ENCODE measurements at regions of chr9 and their contacts with region 1.

Region 1: DNA sequence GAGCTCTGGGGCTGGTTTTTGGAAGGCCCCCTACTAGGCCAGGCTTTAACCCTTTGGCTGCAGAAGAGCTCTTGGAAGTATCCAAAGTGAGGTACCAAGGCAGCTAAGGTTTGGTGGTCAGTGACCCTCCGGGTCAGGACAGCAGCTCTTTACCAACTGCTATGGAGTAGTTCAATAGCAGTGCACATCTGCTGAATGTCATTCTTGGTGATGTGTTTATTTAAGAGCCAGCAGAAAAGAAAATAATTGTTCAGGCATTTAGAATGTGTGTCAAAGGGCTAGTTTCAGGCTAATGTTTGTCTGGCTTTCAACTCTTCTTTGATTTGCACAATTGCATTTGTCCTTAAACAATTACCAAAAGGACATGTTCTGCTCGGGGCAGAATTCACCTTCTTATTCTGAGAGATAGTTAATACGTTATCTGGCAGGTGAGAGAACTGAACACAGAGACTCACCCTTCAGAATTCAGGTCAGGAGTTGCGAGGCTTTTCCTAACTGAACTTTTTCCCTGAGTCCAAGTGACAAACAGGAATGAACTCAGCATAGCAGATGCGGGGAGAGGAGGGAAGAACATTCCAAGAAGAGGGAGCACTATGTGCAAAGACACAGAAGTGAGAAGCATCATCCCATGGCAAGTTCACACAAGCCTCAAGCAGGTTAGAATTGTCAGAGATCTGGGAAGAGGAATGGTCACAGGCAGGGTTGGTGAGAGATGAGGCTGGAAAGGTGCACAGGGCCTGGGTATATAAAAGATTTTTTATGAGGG is 556.7 kb upstream of the TLE4 start:
- DNase-seq: peak in 1 of 2 donors; percentile 9
- H3K4me3 ChIP-seq: no peak overlapping the region
- H3K27ac ChIP-seq: no peak overlapping the region
- H3K4me1 ChIP-seq: no peaks in the 10 kb centered on the region
- H3K27me3 ChIP-seq: no peaks in the 10 kb centered on the region
- CTCF ChIP-seq: no peak
- EP300 ChIP-seq: no peak
- POLR2A ChIP-seq: no peak

Region 2: DNA sequence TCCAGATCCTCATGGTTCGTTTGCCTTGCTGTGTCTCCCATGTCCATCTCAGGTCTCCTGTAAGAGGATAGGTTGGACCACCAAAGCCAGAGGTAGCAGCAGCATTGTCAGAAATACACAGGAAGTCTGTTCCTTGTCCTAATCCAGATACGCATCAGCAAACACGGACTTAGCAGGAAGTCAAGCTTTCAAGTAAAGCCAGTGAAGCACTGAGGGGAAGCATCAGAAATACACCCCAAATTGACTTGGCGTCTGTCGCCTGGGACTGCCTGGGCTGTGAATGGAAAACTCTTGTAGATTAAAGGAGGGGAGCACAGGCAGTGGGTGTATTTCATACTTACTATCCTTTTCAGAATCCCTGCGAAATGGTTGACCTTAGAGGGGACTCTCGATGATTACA is 546.9 kb before region 1 on chr9:
- intact Hi-C with region 1: no loop called
- DNase-seq: no peak
- H3K4me3 ChIP-seq: no peak overlapping the region
- H3K27ac ChIP-seq: no peak overlapping the region
- H3K4me1 ChIP-seq: no peaks in the 10 kb centered on the region
- H3K27me3 ChIP-seq: no peaks in the 10 kb centered on the region
- CTCF ChIP-seq: no peak
- EP300 ChIP-seq: no peak
- POLR2A ChIP-seq: no peak

Region 3: GRCh38 chr9:78973889-78974288 is 41.2 kb before region 1 on chr9:
- intact Hi-C with region 1: loop called (anchors 5 kb)
- DNase-seq: no peak
- H3K4me3 ChIP-seq: no peak overlapping the region
- H3K27ac ChIP-seq: no peak overlapping the region
- H3K4me1 ChIP-seq: no peaks in the 10 kb centered on the region
- H3K27me3 ChIP-seq: no peaks in the 10 kb centered on the region
- CTCF ChIP-seq: no peak
- EP300 ChIP-seq: no peak
- POLR2A ChIP-seq: no peak